ENCODE measurements at regions of chr15 and their contacts with region 1.

Region 1: GRCh38 chr15:55267401-55268175 is 22.0 kb downstream of the RAB27A start:
- DNase-seq: no peak
- H3K4me3 ChIP-seq: no peak overlapping the region
- H3K27ac ChIP-seq: peak overlapping the region in 1 of 2 donors; percentile 40
- H3K4me1 ChIP-seq: no peaks in the 10 kb centered on the region
- H3K27me3 ChIP-seq: no peaks in the 10 kb centered on the region
- CTCF ChIP-seq: no peak
- POLR2A ChIP-seq: no peak

Region 2: DNA sequence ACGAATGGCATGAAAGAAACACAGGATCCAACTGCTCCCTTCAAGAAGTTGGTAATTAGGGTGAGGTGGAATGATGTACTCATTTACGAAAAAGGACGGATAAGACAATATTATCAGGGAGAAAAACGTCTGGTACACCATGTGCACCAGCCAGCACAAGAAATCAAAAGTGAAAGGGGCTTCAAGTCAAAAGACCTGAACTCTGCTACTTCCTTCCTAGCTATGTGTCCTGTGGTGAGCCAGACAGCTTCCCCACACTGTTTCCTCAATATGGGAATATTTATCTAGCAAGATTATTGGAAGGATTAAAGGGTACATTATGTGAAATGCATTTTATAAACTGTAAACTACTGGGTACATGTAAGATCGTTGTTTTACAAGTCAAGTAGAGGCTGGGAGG is 11.9 kb before region 1 on chr15:
- intact Hi-C with region 1: loop called (anchors 2 kb)
- DNase-seq: no peak
- H3K4me3 ChIP-seq: peak overlapping the region in 1 of 3 donors; percentile 19
- H3K27ac ChIP-seq: no peak overlapping the region
- H3K4me1 ChIP-seq: no peaks in the 10 kb centered on the region
- H3K27me3 ChIP-seq: no peaks in the 10 kb centered on the region
- CTCF ChIP-seq: no peak
- POLR2A ChIP-seq: no peak